A673 (cell line): ENCODE measurements at regions of chr4 and their contacts with region 1.

Region 1: GRCh38 chr4:185209031-185209851 is at the start of gene SNX25:
- DNase-seq: peak; percentile 81
- H3K4me3 ChIP-seq: peak within 1 kb of the TSS; percentile 69
- H3K27ac ChIP-seq: peak within 1 kb of the TSS; percentile 40
- H3K4me1 ChIP-seq: peaks cover 14% of the 10 kb centered on the region
- H3K27me3 ChIP-seq: peaks cover 17% of the 10 kb centered on the region
- CTCF ChIP-seq: no peak
- total RNA-seq, gene SNX25: 3.5 and 5.8 TPM in 2 replicates

Region 2: GRCh38 chr4:185381288-185382196 is 172.3 kb after region 1 on chr4:
- CTCF ChIA-PET with region 1: no interaction called
- POLR2A ChIA-PET with region 1: no interaction called
- intact Hi-C with region 1: loop called (anchors 2 kb)
- DNase-seq: peak; percentile 90
- H3K4me3 ChIP-seq: no peak overlapping the region
- H3K27ac ChIP-seq: no peak overlapping the region
- H3K4me1 ChIP-seq: peaks cover 20% of the 10 kb centered on the region
- H3K27me3 ChIP-seq: peaks cover 9% of the 10 kb centered on the region
- CTCF ChIP-seq: no peak

Region 3: GRCh38 chr4:185395956-185396723 is 186.9 kb after region 1 on chr4:
- CTCF ChIA-PET with region 1: no interaction called
- POLR2A ChIA-PET with region 1: no interaction called
- intact Hi-C with region 1: loop called (anchors 5 kb)
- DNase-seq: peak; percentile 97
- H3K4me3 ChIP-seq: peak overlapping the region; percentile 62
- H3K27ac ChIP-seq: peak overlapping the region; percentile 93
- H3K4me1 ChIP-seq: peaks cover 18% of the 10 kb centered on the region
- H3K27me3 ChIP-seq: no peaks in the 10 kb centered on the region
- CTCF ChIP-seq: no peak